ENCODE measurements at regions of chr3 and their contacts with region 1.

Region 1: GRCh38 chr3:178518660-178519396 is 17.4 kb upstream of the KCNMB2 start:
- DNase-seq: peak; percentile 95
- ATAC-seq: peak; percentile 74
- H3K4me3 ChIP-seq: peak overlapping the region; percentile 48
- H3K27ac ChIP-seq: peak overlapping the region; percentile 97
- H3K4me1 ChIP-seq: peaks cover 83% of the 10 kb centered on the region
- H3K27me3 ChIP-seq: no peaks in the 10 kb centered on the region
- CTCF ChIP-seq: no peak
- EP300 ChIP-seq: peak; percentile 79; a peak in 3 of 4 replicates
- POLR2A ChIP-seq: peak; percentile 82
- RAD21 ChIP-seq: peak; percentile 18; the same call in 1 of the 2 replicates

Region 2: GRCh38 chr3:178480795-178481194 is 38.0 kb before region 1 on chr3:
- CTCF ChIA-PET with region 1: interaction called, 6 read pairs
- POLR2A ChIA-PET with region 1: interaction called, 7 read pairs
- RAD21 ChIA-PET with region 1: interaction called, 10 read pairs
- SMC1A ChIA-PET with region 1: interaction called, 10 read pairs
- in situ Hi-C with region 1: no loop called
- intact Hi-C with region 1: loop called (anchors 2 kb)
- DNase-seq: peak; percentile 70
- ATAC-seq: peak; percentile 99
- H3K4me3 ChIP-seq: no peak overlapping the region
- H3K27ac ChIP-seq: peak overlapping the region; percentile 70
- H3K4me1 ChIP-seq: peaks cover 25% of the 10 kb centered on the region
- H3K27me3 ChIP-seq: no peaks in the 10 kb centered on the region
- CTCF ChIP-seq: no peak
- EP300 ChIP-seq: peak; percentile 90 to 95; a peak in 3 of 4 replicates
- POLR2A ChIP-seq: peak; percentile 30; the same call in 1 of the 2 replicates
- RAD21 ChIP-seq: peak; percentile 25; the same call in 1 of the 2 replicates

Region 3: GRCh38 chr3:178532476-178532875 is 13.6 kb after region 1 on chr3:
- CTCF ChIA-PET with region 1: interaction called, 5 read pairs
- POLR2A ChIA-PET with region 1: interaction called, 7 read pairs
- RAD21 ChIA-PET with region 1: interaction called, 12 read pairs
- SMC1A ChIA-PET with region 1: interaction called, 18 read pairs
- in situ Hi-C with region 1: no loop called
- intact Hi-C with region 1: no loop called
- DNase-seq: no peak
- ATAC-seq: peak; percentile 78
- H3K4me3 ChIP-seq: no peak overlapping the region
- H3K27ac ChIP-seq: no peak overlapping the region
- H3K4me1 ChIP-seq: peaks cover 18% of the 10 kb centered on the region
- H3K27me3 ChIP-seq: no peaks in the 10 kb centered on the region
- CTCF ChIP-seq: no peak
- EP300 ChIP-seq: peak; percentile 82 to 85
- POLR2A ChIP-seq: no peak
- RAD21 ChIP-seq: no peak

Region 4: DNA sequence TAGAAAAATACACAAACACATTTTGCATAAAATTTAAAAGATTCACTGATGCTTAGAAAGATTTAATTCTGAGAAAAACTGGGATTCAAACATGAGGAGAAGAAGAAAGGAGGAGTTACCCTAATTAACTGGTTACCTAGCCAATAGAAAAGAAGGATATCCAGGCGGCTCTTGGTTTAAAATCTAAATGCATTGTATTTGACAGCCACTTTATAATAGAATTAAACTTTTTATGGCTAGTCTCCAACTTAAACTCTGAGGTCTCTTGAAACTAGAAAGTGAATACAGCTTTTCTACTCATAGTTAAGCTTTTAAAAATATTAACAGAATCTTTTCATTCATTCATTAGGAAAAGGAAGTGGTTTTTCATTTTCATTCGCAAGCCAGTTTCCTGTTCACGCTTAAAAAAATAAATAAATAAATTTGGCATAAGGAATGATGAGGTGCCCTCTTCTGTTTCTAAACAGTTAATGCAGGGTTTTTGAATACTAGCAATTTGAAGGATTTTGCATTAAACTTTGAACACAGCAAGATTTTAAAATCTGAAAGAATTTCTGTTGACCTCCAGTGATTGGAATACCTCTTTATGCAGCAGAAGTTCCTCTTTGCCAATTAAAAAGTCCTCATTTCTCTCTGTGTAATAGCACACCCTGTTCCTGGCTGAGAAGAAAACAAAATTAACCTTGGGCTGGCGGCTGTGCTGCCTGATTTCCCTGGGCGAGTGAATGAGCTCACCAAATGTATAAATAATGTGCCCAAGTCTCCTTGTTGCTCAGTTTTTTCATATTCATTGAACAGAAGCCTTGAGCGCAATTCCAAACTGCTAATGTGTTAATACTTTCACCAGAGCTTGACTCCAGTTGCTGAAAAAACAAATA is 447.7 kb after region 1 on chr3:
- CTCF ChIA-PET with region 1: interaction called, 6 read pairs
- POLR2A ChIA-PET with region 1: no interaction called
- RAD21 ChIA-PET with region 1: interaction called, 11 read pairs
- SMC1A ChIA-PET with region 1: interaction called, 3 read pairs
- in situ Hi-C with region 1: no loop called
- intact Hi-C with region 1: loop called (anchors 1 kb)
- DNase-seq: peak; percentile 32
- ATAC-seq: peak; percentile 26
- H3K4me3 ChIP-seq: peak overlapping the region; percentile 39; the same call in 1 of the 2 replicates
- H3K27ac ChIP-seq: peak overlapping the region; percentile 73
- H3K4me1 ChIP-seq: peaks cover 32% of the 10 kb centered on the region
- H3K27me3 ChIP-seq: no peaks in the 10 kb centered on the region
- CTCF ChIP-seq: peak; percentile 41 to 61 (median 45); a peak in 5 of 6 replicates
- EP300 ChIP-seq: no peak; a peak in 1 of 4 replicates
- POLR2A ChIP-seq: no peak
- RAD21 ChIP-seq: peak; percentile 91

Measured in GM12878 (cell line).